WTC11 (cell line): ENCODE measurements at regions of chr17 and their contacts with region 1.

Region 1: GRCh38 chr17:75238684-75239191 is 22.7 kb downstream of the GGA3 start:
- DNase-seq: peak; percentile 60
- ATAC-seq: peak; percentile 68
- H3K4me3 Mint-ChIP-seq: no peak overlapping the region
- H3K27ac Mint-ChIP-seq: peak overlapping the region; percentile 99
- H3K4me1 Mint-ChIP-seq: peaks cover 6% of the 10 kb centered on the region
- H3K27me3 Mint-ChIP-seq: no peaks in the 10 kb centered on the region
- CTCF ChIP-seq: peak; percentile 66

Region 2: GRCh38 chr17:75077496-75078283 is 161.0 kb before region 1 on chr17:
- CTCF ChIA-PET with region 1: interaction called, 10 read pairs
- POLR2A ChIA-PET with region 1: no interaction called
- DNase-seq: peak; percentile 51
- ATAC-seq: peak; percentile 51
- H3K4me3 Mint-ChIP-seq: peak overlapping the region; percentile 54
- H3K27ac Mint-ChIP-seq: no peak overlapping the region
- H3K4me1 Mint-ChIP-seq: peaks cover 28% of the 10 kb centered on the region
- H3K27me3 Mint-ChIP-seq: peaks cover 12% of the 10 kb centered on the region
- CTCF ChIP-seq: no peak

Region 3: DNA sequence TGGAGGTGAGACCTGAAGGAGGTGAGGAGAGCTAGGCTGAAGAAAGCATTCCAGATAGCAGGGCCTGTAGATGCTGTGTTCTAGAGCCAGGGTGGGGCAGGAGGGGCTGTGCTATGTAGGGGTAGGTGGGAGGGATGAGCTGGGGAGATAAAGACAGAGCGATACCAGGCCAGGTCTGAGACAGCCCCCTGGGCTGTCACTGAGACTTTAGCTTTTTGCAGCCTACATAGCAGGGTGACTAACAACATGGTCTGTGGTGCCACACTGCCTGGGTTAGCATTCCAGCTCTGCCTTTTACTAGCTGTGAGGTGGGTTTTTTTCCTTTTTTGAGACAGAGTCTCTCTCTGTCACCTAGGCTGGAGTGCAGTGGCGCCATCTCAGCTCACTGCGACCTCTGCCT is 18.9 kb before region 1 on chr17:
- CTCF ChIA-PET with region 1: interaction called, 18 read pairs
- POLR2A ChIA-PET with region 1: no interaction called
- DNase-seq: no peak
- ATAC-seq: no peak
- H3K4me3 Mint-ChIP-seq: no peak overlapping the region
- H3K27ac Mint-ChIP-seq: no peak overlapping the region
- H3K4me1 Mint-ChIP-seq: no peaks in the 10 kb centered on the region
- H3K27me3 Mint-ChIP-seq: no peaks in the 10 kb centered on the region; the same call in 1 of the 2 replicates
- CTCF ChIP-seq: no peak

Region 4: GRCh38 chr17:75261336-75262111 is 22.8 kb after region 1 on chr17 and contains the starts of genes GGA3 and MRPS7:
- CTCF ChIA-PET with region 1: interaction called, 155 read pairs
- POLR2A ChIA-PET with region 1: interaction called, 8 read pairs
- DNase-seq: peak; percentile 96
- ATAC-seq: peak; percentile 96
- H3K4me3 Mint-ChIP-seq: peak within 1 kb of the TSS; percentile 98
- H3K27ac Mint-ChIP-seq: peak within 1 kb of the TSS; percentile 100
- H3K4me1 Mint-ChIP-seq: peaks cover 26% of the 10 kb centered on the region
- H3K27me3 Mint-ChIP-seq: no peaks in the 10 kb centered on the region
- CTCF ChIP-seq: no peak
- total RNA-seq, gene GGA3: 54.5 to 66.9 TPM (median 62.7 TPM) in 3 replicates
- total RNA-seq, gene MRPS7: 85.8 to 94.7 TPM (median 87.5 TPM) in 3 replicates

Region 5: GRCh38 chr17:75393523-75394331 is 155.0 kb after region 1 on chr17:
- CTCF ChIA-PET with region 1: interaction called, 16 read pairs
- POLR2A ChIA-PET with region 1: no interaction called
- DNase-seq: peak; percentile 100
- ATAC-seq: peak; percentile 97
- H3K4me3 Mint-ChIP-seq: peak overlapping the region; percentile 94
- H3K27ac Mint-ChIP-seq: peak overlapping the region; percentile 95
- H3K4me1 Mint-ChIP-seq: peaks cover 42% of the 10 kb centered on the region
- H3K27me3 Mint-ChIP-seq: peaks cover 2% of the 10 kb centered on the region; the same call in 1 of the 2 replicates
- CTCF ChIP-seq: no peak

Region 6: GRCh38 chr17:75418531-75418930 is 179.8 kb after region 1 on chr17:
- CTCF ChIA-PET with region 1: interaction called, 56 read pairs
- POLR2A ChIA-PET with region 1: no interaction called
- DNase-seq: no peak
- ATAC-seq: no peak
- H3K4me3 Mint-ChIP-seq: no peak overlapping the region
- H3K27ac Mint-ChIP-seq: no peak overlapping the region
- H3K4me1 Mint-ChIP-seq: no peaks in the 10 kb centered on the region
- H3K27me3 Mint-ChIP-seq: peaks cover 6% of the 10 kb centered on the region
- CTCF ChIP-seq: no peak